ENCODE measurements at regions of chr2 and their contacts with region 1.

Region 1: DNA sequence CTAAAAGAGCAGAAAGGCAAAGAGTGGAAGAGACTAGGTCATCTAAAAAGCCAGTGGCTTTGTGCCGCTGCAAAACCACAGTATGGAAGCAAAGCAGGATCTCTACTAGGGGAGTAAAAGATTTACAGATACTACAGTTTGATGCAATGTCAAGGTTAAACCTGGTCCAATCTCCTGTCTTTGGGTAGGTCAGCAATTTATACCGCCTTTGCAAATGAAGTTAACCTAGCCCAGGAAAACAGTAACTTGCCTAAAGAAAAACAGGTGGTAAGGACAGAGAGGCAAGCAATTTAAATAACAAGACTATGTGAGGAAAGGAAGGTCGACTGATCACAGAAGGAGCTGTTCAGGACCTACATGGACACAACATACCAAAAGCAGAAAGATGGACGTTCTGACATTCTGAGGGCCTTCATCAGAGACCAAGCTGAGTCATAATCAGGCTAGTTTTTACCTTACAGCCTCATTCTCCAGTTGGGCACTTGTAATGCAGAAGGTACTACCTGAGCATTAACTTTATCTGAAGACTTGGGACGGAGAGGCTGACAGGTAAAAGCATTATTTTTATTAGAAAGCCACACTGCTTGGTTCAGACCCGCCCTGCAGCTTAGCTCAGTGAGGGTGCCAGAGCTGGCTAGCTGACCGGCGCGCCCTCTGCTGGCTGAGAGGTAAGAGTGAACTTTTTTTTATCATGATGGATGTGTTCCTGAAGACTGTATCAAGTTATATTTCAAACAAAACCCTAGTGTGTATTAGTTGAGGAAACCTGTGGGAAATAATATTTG is 15.9 kb downstream of the CDKL4 start:
- DNase-seq: peak; percentile 73
- ATAC-seq: peak; percentile 88
- H3K4me3 ChIP-seq: peak overlapping the region; percentile 58 to 73 (median 68); a peak in 5 of 6 replicates
- H3K27ac ChIP-seq: peak overlapping the region; percentile 39
- H3K4me1 ChIP-seq: peaks cover 29% of the 10 kb centered on the region
- H3K27me3 ChIP-seq: no peaks in the 10 kb centered on the region
- CTCF ChIP-seq: peak; percentile 93
- EP300 ChIP-seq: no peak
- POLR2A ChIP-seq: no peak
- RAD21 ChIP-seq: peak; percentile 84

Region 2: DNA sequence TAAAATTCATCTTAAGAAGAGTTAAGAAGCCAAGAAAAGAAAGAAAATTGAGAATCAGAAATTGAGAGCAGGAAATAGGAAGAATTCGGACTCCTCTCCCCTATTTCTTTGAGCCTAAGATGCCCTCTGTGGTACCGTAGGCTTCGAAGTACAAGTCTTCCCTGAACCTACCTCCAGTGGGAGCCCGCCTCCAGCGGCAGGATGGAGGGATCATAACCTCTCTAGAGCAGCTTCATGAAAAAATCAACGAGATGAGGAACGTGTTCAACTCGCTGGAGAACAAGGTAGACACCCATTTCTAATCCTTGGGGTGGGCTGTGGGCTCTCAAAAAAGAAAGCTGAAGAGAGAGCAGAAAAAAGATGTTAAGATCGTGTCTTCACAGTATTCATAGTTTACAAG is 301.8 kb before region 1 on chr2:
- CTCF ChIA-PET with region 1: interaction called, 3 read pairs
- POLR2A ChIA-PET with region 1: no interaction called
- in situ Hi-C with region 1: no loop called
- intact Hi-C with region 1: loop called (anchors 1 kb)
- DNase-seq: peak; percentile 62
- ATAC-seq: peak; percentile 99
- H3K4me3 ChIP-seq: peak overlapping the region in 2 of 3 experiments; percentile 35 to 37; a peak in 5 of 6 replicates
- H3K27ac ChIP-seq: no peak overlapping the region
- H3K4me1 ChIP-seq: peaks cover 34% of the 10 kb centered on the region
- H3K27me3 ChIP-seq: no peaks in the 10 kb centered on the region
- CTCF ChIP-seq: peak; percentile 80
- EP300 ChIP-seq: no peak
- POLR2A ChIP-seq: no peak
- RAD21 ChIP-seq: peak; percentile 75

Region 3: DNA sequence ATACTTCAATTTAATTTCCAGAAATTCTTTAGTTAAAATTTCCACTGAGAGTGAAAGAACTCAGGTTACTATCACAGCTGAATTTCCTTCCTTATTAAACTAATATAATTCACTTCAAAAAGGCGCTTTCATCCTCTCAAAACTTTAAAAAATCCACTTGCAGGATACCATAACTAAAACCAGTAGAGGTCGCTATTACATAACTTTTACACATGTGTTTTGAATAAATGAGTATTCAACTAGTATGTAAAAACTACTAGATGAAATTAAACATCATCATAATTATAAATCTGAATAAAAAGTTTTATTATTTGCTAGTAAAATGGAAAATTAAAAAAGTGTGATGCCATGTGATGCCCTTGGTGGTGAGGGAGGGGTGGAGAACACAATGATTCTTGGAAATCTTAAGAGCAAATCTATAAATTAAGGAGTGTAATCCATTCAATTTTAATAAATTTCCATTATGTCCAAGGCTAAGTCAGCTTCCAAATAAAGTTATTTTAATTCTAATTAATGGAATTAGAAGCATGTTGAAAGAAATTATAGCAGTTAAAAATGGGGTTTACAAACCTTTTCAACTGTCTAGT is 168.4 kb before region 1 on chr2:
- CTCF ChIA-PET with region 1: interaction called, 109 read pairs
- POLR2A ChIA-PET with region 1: no interaction called
- in situ Hi-C with region 1: no loop called
- intact Hi-C with region 1: loop called (anchors 1 kb)
- DNase-seq: peak; percentile 62
- ATAC-seq: no peak
- H3K4me3 ChIP-seq: no peak overlapping the region
- H3K27ac ChIP-seq: no peak overlapping the region
- H3K4me1 ChIP-seq: no peaks in the 10 kb centered on the region
- H3K27me3 ChIP-seq: no peaks in the 10 kb centered on the region
- CTCF ChIP-seq: peak; percentile 64
- EP300 ChIP-seq: no peak
- POLR2A ChIP-seq: no peak
- RAD21 ChIP-seq: peak; percentile 64

Region 4: GRCh38 chr2:39069136-39069515 is 158.7 kb before region 1 on chr2:
- CTCF ChIA-PET with region 1: no interaction called
- POLR2A ChIA-PET with region 1: no interaction called
- in situ Hi-C with region 1: loop called (anchors 5 kb)
- intact Hi-C with region 1: no loop called
- DNase-seq: no peak
- ATAC-seq: peak; percentile 73; the same call in 2 of the 3 replicates
- H3K4me3 ChIP-seq: no peak overlapping the region
- H3K27ac ChIP-seq: no peak overlapping the region
- H3K4me1 ChIP-seq: no peaks in the 10 kb centered on the region
- H3K27me3 ChIP-seq: no peaks in the 10 kb centered on the region
- CTCF ChIP-seq: no peak
- EP300 ChIP-seq: no peak
- POLR2A ChIP-seq: no peak
- RAD21 ChIP-seq: no peak

Region 5: DNA sequence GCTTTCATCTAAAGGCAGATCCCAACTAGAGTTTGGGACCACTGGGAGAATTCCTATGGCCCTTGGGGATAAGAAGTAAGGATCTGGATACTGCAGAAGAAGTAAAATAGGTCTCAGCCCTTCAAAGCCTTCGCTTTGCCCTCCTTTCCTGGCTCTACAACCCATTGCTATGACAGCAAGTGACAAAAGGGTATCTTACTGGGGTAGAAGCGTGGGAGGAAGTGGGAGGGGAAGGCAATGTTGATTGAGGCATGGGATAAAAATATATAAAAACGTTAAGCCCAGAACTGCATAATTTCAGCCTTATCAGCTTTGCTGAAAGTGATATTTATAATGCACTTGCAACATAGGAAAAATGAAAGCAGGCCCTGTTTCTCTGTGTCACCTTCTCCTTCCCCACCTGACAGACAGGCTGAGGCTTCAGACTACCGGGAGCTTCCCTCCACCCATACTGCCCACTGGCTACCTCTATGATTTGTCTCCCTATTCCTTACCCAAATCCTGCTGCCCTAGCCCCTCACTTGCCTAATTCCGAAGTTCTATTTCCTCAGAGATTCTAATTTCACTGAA is 92.0 kb before region 1 on chr2:
- CTCF ChIA-PET with region 1: no interaction called
- POLR2A ChIA-PET with region 1: interaction called, 6 read pairs
- in situ Hi-C with region 1: no loop called
- intact Hi-C with region 1: loop called (anchors 1 kb)
- DNase-seq: no peak
- ATAC-seq: no peak
- H3K4me3 ChIP-seq: no peak overlapping the region
- H3K27ac ChIP-seq: peak overlapping the region; percentile 25
- H3K4me1 ChIP-seq: peaks cover 64% of the 10 kb centered on the region
- H3K27me3 ChIP-seq: no peaks in the 10 kb centered on the region
- CTCF ChIP-seq: no peak
- EP300 ChIP-seq: no peak
- POLR2A ChIP-seq: no peak
- RAD21 ChIP-seq: no peak

Region 6: GRCh38 chr2:39264733-39265132 is 36.9 kb after region 1 on chr2:
- CTCF ChIA-PET with region 1: no interaction called
- POLR2A ChIA-PET with region 1: no interaction called
- in situ Hi-C with region 1: no loop called
- intact Hi-C with region 1: no loop called
- DNase-seq: no peak
- ATAC-seq: no peak
- H3K4me3 ChIP-seq: no peak overlapping the region
- H3K27ac ChIP-seq: no peak overlapping the region
- H3K4me1 ChIP-seq: no peaks in the 10 kb centered on the region
- H3K27me3 ChIP-seq: no peaks in the 10 kb centered on the region
- CTCF ChIP-seq: no peak
- EP300 ChIP-seq: no peak
- POLR2A ChIP-seq: no peak
- RAD21 ChIP-seq: no peak

Measured in HepG2 (cell line).